Panc1 (cell line): ENCODE measurements at regions of chr20 and their contacts with region 1.

Region 1: DNA sequence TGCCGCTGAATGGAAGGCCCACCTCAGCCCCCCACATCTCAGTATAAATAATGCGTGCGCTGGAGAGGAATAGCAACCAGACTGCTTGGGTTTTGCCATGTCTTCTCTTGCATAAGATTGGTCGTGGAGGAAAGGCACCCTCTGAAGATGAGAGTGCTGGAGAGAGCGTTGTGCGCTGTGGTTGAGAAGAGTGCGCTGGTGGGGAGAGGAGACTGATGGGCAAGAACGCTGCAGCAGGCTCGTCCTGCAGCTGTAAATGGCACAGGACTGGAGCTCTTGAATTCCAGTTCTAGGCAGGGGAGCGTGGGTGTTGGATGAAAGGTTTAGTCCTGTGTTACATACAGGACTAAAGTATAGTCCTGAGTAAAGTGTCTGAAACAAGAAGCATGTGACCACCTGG is 51.5 kb downstream of the RPRD1B start:
- DNase-seq: no peak
- ATAC-seq: no peak
- H3K4me3 ChIP-seq: no peak overlapping the region
- H3K27ac ChIP-seq: no peak overlapping the region
- H3K4me1 ChIP-seq: 0 out of 2 replicates have a peak, but pooled peaks cover 4% of the 10 kb centered on the region
- H3K27me3 ChIP-seq: no peaks in the 10 kb centered on the region
- CTCF ChIP-seq: no peak

Region 2: GRCh38 chr20:38246357-38247165 is 161.5 kb after region 1 on chr20:
- CTCF ChIA-PET with region 1: interaction called, 13 read pairs
- POLR2A ChIA-PET with region 1: no interaction called
- in situ Hi-C with region 1: no loop called
- intact Hi-C with region 1: no loop called
- DNase-seq: no peak
- ATAC-seq: peak; percentile 41; the same call in 1 of the 2 replicates
- H3K4me3 ChIP-seq: no peak overlapping the region
- H3K27ac ChIP-seq: no peak overlapping the region
- H3K4me1 ChIP-seq: no peaks in the 10 kb centered on the region
- H3K27me3 ChIP-seq: no peaks in the 10 kb centered on the region
- CTCF ChIP-seq: no peak